Activated T-helper 2 cell treated with anti-CD3 and anti-CD28 coated beads, Interferon-gamma antibody, Interleukin-2, Interleukin-4, amounts not matched to agents 10 μg/mL and 5 μg/mL and 100 μg/mL, durations not matched to agents 14 hours and 24 hours and 36 hours (primary cell): ENCODE measurements at regions of chr16 and their contacts with region 1.

Region 1: GRCh38 chr16:77675464-77676324 is 46.6 kb upstream of the NUDT7 start:
- DNase-seq: peak; percentile 30
- H3K4me3 Mint-ChIP-seq: no peak overlapping the region
- H3K27ac Mint-ChIP-seq: no peak overlapping the region
- H3K4me1 Mint-ChIP-seq: no peaks in the 10 kb centered on the region
- H3K27me3 Mint-ChIP-seq: no peaks in the 10 kb centered on the region

Region 2: DNA sequence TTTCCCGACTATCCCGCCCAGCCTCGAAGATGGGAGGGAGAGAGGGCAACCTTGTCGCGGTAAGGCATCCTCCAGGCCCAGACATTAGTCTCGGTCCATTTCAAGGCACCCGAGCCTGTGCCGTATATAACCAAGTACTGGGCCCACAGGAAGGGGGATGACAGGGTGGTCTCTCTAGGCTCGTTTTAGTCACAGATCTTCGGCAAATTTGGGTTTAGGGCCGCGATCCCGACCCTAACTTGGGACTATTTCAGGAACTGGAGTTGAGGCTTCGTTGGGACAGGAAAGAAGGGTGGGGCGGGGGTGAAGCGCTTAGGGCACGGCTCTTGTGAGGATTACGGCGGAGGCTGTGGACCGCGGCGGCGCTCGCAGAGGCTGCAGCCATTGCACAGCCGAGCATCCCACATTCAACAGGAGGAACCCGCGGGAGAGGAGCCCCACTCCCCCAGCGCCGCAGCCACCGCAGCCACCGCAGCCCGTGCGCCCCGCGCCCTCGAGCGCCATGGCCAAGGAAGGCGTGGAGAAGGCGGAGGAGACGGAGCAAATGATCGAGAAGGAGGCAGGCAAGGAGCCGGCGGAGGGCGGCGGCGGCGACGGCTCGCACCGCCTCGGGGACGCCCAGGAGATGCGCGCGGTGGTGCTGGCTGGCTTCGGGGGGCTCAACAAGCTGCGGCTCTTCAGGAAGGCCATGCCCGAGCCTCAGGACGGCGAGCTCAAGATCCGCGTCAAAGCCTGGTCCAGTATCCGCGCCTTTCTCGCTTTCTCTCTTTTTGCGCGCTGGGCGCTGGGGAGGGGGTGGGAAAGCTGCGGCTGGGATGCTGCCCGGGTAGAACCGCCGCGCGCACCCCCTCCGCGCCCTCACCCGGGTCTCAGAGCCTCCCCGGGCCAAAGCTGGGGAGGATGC is 112.7 kb after region 1 on chr16 and contains the start of gene VAT1L:
- intact Hi-C with region 1: loop called (anchors 5 kb)
- DNase-seq: no peak
- H3K4me3 Mint-ChIP-seq: peak within 1 kb of the TSS; percentile 68
- H3K27ac Mint-ChIP-seq: no peak within 1 kb of the TSS
- H3K4me1 Mint-ChIP-seq: no peaks in the 10 kb centered on the region
- H3K27me3 Mint-ChIP-seq: peaks cover 56% of the 10 kb centered on the region
- total RNA-seq, gene VAT1L: not detected in 2 replicates

Region 3: DNA sequence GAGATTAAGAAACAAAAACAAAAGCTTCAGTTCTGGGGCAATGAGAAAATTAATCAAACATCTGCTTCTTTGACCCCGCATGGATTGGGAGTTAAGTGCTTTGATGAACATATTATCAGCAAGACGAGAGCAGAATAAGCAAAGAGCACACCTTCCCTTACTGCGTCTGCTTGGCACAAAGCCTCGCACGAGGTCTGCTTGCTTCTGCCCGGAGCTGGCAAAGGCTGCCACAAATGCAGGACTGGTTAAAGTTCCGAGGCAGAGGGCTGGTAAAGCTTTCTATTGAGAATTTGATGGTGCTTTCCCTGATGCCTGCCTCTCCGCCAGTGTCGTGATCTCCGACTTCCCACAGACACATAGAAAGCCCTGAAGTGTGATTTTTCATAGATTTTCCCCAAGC is 129.7 kb after region 1 on chr16:
- intact Hi-C with region 1: no loop called
- DNase-seq: no peak
- H3K4me3 Mint-ChIP-seq: no peak overlapping the region
- H3K27ac Mint-ChIP-seq: no peak overlapping the region
- H3K4me1 Mint-ChIP-seq: no peaks in the 10 kb centered on the region
- H3K27me3 Mint-ChIP-seq: no peaks in the 10 kb centered on the region

Region 4: DNA sequence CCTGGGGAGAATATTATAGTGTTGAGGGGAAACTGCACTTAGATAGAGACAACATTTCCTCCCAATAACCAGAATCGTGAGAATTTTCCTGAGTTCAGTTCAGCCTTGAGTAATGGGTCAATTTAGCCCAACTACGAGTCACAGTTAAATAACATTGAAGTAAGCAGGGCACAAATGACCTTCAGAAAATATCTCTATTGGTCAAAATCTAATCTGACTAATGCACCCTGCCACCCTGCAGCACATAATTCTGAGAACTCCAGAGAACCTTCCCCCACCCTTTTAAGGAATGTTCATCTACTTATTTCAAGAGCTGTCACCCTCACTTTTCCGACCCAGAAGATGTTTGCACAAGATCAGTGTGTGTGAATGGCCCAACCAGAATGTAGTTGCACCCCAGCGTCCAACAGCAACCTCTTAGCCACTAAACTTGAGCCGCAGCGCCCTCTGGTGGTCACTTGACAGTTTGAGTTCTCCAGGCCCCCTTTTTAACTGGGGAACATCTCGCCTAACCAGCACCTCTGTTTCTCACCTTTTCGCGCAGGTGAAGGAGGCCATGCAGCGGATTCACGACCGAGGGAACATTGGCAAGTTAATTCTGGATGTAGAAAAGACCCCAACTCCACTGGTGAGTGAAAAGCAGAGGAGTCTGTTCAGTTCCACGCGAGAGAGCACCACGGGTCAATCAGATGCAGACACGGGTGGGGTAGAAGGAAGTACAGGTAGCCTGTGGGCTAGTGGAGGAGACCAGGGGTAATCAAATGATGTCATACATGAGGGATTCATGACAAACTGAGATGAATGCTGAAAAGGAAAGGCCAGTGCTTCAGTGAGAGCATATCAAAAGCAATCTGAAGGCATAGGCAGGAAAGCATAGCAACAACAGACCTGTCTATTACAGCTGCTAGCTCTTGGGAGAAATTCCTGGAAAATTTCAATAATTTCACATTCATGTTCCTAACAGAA is 295.9 kb after region 1 on chr16:
- intact Hi-C with region 1: loop called (anchors 1 kb)
- DNase-seq: peak; percentile 54
- H3K4me3 Mint-ChIP-seq: no peak overlapping the region
- H3K27ac Mint-ChIP-seq: no peak overlapping the region
- H3K4me1 Mint-ChIP-seq: no peaks in the 10 kb centered on the region
- H3K27me3 Mint-ChIP-seq: peaks cover 2% of the 10 kb centered on the region

Region 5: DNA sequence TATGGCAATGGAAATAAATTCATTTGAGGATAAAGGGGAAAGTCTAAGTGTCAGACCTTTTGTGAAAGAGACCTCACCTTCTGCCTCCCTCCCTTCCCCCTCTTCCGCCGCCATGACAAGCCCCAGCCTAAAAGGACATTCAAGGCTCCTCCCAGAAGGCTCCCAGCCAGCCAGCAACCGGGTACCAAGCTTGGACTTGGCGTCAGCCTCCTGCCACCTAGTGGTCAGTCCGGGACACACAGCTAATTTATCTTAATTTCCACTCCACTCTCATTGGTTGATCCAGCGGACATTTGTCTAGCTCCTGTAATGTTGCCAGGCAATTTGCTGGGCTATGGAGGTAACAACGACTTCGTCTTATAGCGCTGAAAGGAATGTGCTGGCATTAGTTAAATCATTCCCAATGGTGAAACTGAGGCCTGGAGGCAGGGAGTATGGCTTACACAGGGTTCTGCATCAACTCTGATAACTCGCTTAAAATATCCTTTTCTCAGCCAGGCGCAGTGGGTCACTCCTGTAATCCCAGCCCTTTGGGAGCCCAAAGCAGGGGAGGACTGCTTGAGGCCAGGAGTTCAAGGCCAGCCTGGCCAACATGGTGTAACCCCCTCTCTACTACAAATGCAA is 327.3 kb after region 1 on chr16:
- intact Hi-C with region 1: loop called (anchors 1 kb)
- DNase-seq: peak; percentile 70
- H3K4me3 Mint-ChIP-seq: no peak overlapping the region
- H3K27ac Mint-ChIP-seq: no peak overlapping the region
- H3K4me1 Mint-ChIP-seq: peaks cover 2% of the 10 kb centered on the region
- H3K27me3 Mint-ChIP-seq: no peaks in the 10 kb centered on the region